ENCODE measurements at regions of chr11 and their contacts with region 1.

Region 1: GRCh38 chr11:77066229-77067042 is at the start of gene CAPN5:
- DNase-seq: peak; percentile 97
- ATAC-seq: peak; percentile 90
- H3K4me3 ChIP-seq: peak within 1 kb of the TSS; percentile 77
- H3K27ac ChIP-seq: no peak within 1 kb of the TSS
- H3K4me1 ChIP-seq: peaks cover 13% of the 10 kb centered on the region
- H3K27me3 ChIP-seq: no peaks in the 10 kb centered on the region
- CTCF ChIP-seq: no peak
- total RNA-seq, gene CAPN5: 6.3 and 7.7 TPM in 2 replicates

Region 2: DNA sequence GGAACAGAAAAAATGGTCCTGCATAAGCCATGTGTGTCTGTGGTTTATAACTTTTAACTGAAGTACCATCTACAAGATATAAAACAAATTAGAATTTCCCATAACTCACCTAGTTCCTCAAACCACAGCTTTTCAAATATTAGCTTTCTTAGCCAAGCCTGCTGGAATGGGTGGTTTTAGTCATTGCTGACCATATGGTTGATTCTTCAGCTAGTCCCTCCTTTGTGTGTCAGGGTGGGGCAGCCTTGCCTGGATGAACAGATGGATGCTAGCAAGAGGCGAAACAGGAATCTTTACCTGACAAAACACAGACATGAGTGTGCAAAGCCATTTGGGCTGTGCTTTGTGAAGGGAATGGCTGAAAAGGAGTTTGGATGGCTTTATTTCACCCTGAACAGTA is 39.2 kb before region 1 on chr11:
- CTCF ChIA-PET with region 1: no interaction called
- POLR2A ChIA-PET with region 1: no interaction called
- intact Hi-C with region 1: loop called (anchors 2 kb)
- DNase-seq: peak; percentile 98
- ATAC-seq: peak; percentile 96
- H3K4me3 ChIP-seq: no peak overlapping the region
- H3K27ac ChIP-seq: peak overlapping the region; percentile 93
- H3K4me1 ChIP-seq: peaks cover 35% of the 10 kb centered on the region
- H3K27me3 ChIP-seq: no peaks in the 10 kb centered on the region
- CTCF ChIP-seq: no peak

Region 3: GRCh38 chr11:77091146-77091940 is 24.9 kb after region 1 on chr11:
- CTCF ChIA-PET with region 1: interaction called, 17 read pairs
- POLR2A ChIA-PET with region 1: interaction called, 4 read pairs
- intact Hi-C with region 1: loop called (anchors 2 kb)
- DNase-seq: peak; percentile 93
- ATAC-seq: peak; percentile 93
- H3K4me3 ChIP-seq: no peak overlapping the region
- H3K27ac ChIP-seq: no peak overlapping the region
- H3K4me1 ChIP-seq: peaks cover 23% of the 10 kb centered on the region
- H3K27me3 ChIP-seq: no peaks in the 10 kb centered on the region
- CTCF ChIP-seq: peak; percentile 98

Measured in PC-3 (cell line).